Gastrocnemius medialis (tissue), 4 donors: ENCODE measurements at regions of chr20 and their contacts with region 1.

Region 1: DNA sequence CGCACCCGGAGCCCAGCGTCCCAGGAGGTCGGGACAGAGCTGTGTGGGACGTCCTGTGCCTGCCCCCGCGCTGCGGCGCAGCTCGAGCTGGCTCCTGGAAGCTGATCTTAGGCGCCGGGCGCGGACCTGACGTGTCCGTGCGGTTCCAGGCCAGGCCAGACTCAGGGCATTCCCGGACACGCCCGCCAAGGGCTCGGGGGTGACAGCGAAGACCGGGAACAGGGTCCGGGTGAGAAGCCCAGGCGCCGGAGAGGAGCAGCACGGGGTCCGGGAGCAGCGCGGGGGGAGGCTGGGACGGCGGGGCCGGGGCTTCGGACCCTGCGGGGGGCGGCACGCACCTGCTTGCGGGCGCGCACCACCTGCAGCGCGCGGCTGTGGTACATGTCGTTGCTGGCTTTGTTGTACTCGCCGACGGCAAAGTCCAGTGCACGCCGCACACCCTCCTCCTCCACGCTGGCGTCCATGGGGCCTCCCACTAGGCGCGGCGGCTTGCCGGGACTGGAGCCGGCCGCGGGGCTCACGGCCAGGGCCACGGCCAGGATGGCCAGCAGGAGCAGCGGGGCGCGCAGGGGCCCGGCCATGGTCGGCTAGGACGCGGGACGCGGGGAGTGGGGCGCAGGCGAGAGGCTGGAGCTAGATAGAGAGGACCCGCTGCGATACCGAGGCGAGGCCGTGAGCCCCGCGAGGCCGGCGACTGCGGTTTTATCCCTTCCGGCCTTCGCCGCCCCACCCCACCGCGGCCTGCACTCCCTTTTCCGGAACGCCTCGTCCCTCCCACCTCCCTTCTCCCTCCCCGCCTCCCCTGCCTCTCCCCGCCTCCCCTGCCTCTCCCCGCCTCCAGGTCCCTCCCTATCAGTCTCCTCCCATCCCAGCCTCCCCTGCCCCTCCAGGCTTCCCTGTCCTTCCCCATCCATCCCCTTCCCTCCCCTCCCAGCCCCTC is at the start of gene CST3:
- DNase-seq: peak; percentile 94 to 97
- ATAC-seq: peak; percentile 31 to 32
- H3K4me3 ChIP-seq: peak within 1 kb of the TSS; percentile 70 to 98 (median 83)
- H3K27ac ChIP-seq: peak within 1 kb of the TSS; percentile 96 to 100 (median 96)
- H3K4me1 ChIP-seq: peaks cover 58 to 67% of the 10 kb centered on the region in 2 donors
- H3K27me3 ChIP-seq: no peaks in the 10 kb centered on the region
- CTCF ChIP-seq: peak in 1 of 5 experiments; percentile 18
- POLR2A ChIP-seq: peak; percentile 96
- total RNA-seq, gene CST3: 461 to 1,821 (median 697) TPM

Region 2: DNA sequence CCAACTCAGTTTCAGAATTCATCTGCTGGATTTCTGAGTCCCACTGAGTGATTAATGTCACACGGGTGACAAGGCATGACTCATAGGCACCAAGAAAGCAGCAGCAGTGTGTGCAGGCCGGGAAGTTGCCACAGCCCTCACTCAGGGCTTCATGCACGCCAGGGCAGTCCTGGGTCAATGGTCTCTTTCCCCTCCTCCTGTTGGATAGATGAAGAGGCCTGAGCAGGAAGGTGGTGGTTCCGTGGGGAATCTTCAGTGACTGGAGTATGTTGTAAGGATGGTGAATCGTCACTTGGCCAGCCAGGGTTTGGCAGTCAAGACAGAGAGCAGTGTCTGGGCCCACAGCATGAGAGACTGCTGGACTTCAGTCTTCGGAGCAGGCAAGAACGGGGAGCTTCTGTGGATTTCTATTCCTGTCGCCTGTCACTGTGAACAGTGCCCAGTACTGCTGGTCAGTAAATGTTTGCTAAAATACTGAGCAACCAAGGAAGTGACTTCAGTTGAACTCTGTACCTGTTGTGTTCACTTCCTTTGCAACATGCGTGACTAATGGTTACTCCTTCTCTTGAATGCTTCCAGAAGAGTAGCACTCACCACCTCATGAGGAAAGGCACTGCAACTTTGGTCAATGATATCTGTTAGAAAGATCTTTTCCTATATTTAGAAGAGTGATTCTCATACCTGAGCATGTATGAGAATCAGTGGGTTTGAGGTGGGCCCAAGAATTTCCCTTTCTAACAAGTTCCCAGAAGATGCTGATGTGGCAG is 489.4 kb before region 1 on chr20:
- in situ Hi-C with region 1: loop called (anchors 25 kb)
- intact Hi-C with region 1: loop called (anchors 1 kb)
- DNase-seq: peak; percentile 91 to 96
- ATAC-seq: peak; percentile 59 to 72
- H3K4me3 ChIP-seq: peak overlapping the region in 2 of 4 donors; percentile 15 to 36
- H3K27ac ChIP-seq: peak overlapping the region; percentile 94 to 99 (median 94)
- H3K4me1 ChIP-seq: peaks cover 91 to 97% of the 10 kb centered on the region in 2 donors
- H3K27me3 ChIP-seq: no peaks in the 10 kb centered on the region
- CTCF ChIP-seq: no peak
- POLR2A ChIP-seq: peak; percentile 89 to 91

Region 3: GRCh38 chr20:23161968-23162696 is 475.4 kb before region 1 on chr20:
- in situ Hi-C with region 1: loop called (anchors 25 kb)
- intact Hi-C with region 1: no loop called
- DNase-seq: peak; percentile 92 to 97
- ATAC-seq: peak; percentile 90 to 94
- H3K4me3 ChIP-seq: no peak overlapping the region
- H3K27ac ChIP-seq: peak overlapping the region; percentile 77 to 83 (median 78)
- H3K4me1 ChIP-seq: peaks cover 44 to 56% of the 10 kb centered on the region in 2 donors
- H3K27me3 ChIP-seq: no peaks in the 10 kb centered on the region
- CTCF ChIP-seq: no peak
- POLR2A ChIP-seq: peak in 1 of 2 donors; percentile 21

Region 4: DNA sequence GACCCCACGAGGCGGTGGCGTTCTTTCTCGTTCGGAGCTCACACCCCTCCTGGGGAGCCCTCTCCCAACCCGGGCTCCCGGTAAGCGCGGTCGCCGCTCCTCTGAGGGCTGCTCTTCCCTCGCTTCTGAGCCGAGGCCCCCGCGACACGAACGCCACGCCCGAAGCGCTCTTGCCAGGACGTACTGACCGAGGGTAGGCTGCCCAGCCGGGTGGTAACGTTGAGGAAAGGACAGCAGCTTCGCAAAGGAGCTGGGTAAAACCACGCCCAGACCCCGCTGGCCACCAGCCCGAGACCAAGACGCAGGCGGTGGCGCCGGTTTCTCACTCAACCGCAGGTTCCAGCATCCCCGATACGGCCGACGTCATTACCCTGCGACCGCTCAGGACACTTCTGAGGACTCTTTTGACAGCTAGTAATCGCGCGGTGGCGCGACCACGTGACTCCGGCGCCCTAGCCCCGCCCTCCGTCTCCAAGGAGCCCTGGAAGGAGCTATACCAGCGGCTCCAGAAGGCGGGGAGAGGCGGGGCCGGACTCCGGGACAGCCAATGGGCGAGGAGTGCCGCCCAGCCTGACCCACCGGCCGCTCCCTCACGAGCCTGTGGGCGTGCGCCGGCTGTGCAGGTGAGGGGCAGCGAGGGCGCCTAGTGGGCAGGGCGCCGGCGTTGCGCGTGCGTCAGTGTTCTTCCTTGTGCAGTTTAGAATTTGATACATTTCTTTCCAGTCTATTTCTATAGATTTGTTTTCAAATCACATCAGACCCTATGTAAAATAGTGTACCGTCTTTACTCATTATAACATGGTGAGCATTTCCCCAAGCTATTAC is 279.6 kb before region 1 on chr20:
- in situ Hi-C with region 1: loop called in 2 of 4 experiments (anchors 10 kb)
- intact Hi-C with region 1: loop called (anchors 2 kb)
- DNase-seq: peak; percentile 100
- ATAC-seq: peak; percentile 72 to 78
- H3K4me3 ChIP-seq: peak overlapping the region; percentile 76 to 91 (median 78)
- H3K27ac ChIP-seq: peak overlapping the region; percentile 97 to 99 (median 98)
- H3K4me1 ChIP-seq: peaks cover 29% of the 10 kb centered on the region in 2 donors
- H3K27me3 ChIP-seq: no peaks in the 10 kb centered on the region
- CTCF ChIP-seq: peak in 2 of 5 experiments; percentile 18 to 45
- POLR2A ChIP-seq: peak; percentile 79 to 89

Region 5: DNA sequence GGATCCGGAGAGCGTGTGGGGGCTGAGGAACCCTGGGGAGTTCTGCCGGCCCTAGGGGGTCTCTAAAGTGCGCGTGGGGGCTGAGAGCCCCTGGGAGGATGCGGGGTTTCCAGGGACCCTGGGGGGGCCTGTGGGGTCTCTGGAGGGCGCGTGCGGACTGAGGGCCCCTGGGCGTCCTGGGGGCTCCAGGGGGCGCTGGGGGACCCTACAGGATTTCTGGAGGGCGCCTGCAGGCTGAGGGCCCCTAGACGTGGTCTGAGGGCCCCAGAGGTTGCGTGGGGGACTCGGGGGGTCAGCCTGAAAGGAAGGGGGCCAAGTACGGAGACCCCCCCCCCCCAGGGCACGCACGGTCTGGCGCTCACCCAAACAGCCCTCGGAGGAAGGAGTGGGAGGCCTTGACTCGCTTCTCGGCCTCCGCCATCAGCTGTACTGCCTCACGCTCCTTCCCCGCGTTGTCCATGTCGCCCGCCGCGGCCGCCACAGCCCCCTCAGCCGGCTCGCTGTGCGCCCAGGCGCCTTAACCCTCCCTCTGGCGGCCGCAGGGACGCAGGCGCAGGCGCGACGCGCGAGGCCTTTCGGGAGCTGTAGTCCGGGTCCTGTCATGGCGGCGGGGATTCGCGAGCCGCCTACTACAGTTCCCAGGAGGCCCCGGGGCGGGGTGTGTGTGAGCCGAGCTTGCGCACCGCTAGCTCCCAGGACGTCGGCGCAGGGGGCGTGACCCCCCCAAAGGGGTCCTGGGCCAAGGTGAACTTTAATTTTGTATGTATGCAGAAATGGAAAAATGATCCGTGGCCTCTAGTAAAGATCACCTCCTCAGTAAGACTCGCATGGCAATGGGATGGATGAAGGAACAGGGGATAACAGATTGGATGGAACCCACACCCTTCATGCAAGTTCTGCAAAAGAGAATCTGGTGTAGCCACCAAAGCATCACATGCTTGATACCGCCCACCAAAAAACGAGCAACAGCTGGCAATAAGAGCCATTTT is 216.3 kb before region 1 on chr20 and contains the start of gene NAPB:
- in situ Hi-C with region 1: no loop called
- intact Hi-C with region 1: loop called (anchors 10 kb)
- DNase-seq: peak; percentile 92
- ATAC-seq: peak; percentile 89 to 91
- H3K4me3 ChIP-seq: peak within 1 kb of the TSS; percentile 83 to 100 (median 96)
- H3K27ac ChIP-seq: peak within 1 kb of the TSS; percentile 97 to 99 (median 98)
- H3K4me1 ChIP-seq: peaks cover 19 to 30% of the 10 kb centered on the region in 2 donors
- H3K27me3 ChIP-seq: no peaks in the 10 kb centered on the region
- CTCF ChIP-seq: peak; percentile 62 to 92 (median 84)
- POLR2A ChIP-seq: peak; percentile 97
- total RNA-seq, gene NAPB: 3.2 to 8.3 (median 3.8) TPM

Region 6: GRCh38 chr20:23655491-23656211 is 18.1 kb after region 1 on chr20:
- in situ Hi-C with region 1: no loop called
- intact Hi-C with region 1: no loop called
- DNase-seq: peak in 1 of 2 donors; percentile 49
- ATAC-seq: peak in 1 of 2 donors; percentile 24
- H3K4me3 ChIP-seq: no peak overlapping the region
- H3K27ac ChIP-seq: peak overlapping the region; percentile 12 to 61 (median 38)
- H3K4me1 ChIP-seq: peaks cover 8 to 21% of the 10 kb centered on the region in 2 donors
- H3K27me3 ChIP-seq: no peaks in the 10 kb centered on the region
- CTCF ChIP-seq: no peak
- POLR2A ChIP-seq: no peak

Region 7: GRCh38 chr20:23744817-23745216 is 107.3 kb after region 1 on chr20:
- in situ Hi-C with region 1: no loop called
- intact Hi-C with region 1: no loop called
- DNase-seq: no peak
- ATAC-seq: no peak
- H3K4me3 ChIP-seq: no peak overlapping the region
- H3K27ac ChIP-seq: no peak overlapping the region
- H3K4me1 ChIP-seq: no peaks in the 10 kb centered on the region
- H3K27me3 ChIP-seq: no peaks in the 10 kb centered on the region
- CTCF ChIP-seq: no peak
- POLR2A ChIP-seq: no peak

Region 8: DNA sequence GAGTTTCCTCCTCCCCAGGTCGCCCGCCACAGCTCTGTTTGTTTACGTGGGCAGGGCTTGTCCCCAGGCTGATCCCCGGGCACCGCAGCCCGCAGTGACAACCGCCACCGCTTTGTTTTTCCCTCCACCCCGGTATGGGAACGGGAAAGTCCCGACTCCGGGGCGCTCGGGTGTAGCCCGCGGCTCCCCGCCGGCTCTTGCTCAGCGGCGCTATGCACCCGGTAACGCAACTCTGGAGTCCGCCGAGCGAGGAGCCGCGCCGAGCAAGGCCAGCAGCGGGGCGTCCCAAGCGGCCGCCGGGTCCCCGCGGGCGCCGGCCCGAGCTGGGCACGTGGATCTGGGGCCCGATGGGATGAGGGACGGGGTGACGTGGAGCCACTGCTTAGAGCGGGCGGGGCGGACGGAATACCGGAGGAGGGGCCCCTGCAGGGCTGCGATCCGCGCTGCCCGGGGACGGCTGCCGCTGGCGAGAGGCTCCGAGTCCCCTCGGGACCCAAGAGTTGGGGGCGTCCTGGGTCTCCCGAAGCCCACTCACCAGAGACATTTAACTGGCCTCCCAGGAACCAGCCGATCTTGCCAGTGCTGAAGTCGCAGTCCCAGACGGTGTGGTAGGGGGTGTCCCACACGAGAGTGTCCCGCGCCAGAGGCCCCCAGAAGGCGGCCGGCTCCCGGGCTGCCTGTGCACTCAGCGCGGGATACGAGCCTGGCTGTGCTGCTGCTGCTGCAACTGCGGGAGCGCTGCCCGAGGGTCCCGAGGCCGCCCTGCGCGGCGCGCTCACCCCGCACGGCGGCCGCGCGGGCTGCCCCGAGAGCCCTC is 1419.9 kb after region 1 on chr20:
- in situ Hi-C with region 1: loop called in 2 of 4 experiments (anchors 25 kb)
- intact Hi-C with region 1: loop called (anchors 5 kb)
- DNase-seq: peak; percentile 67 to 74
- ATAC-seq: peak; percentile 65 to 70
- H3K4me3 ChIP-seq: peak overlapping the region; percentile 72 to 93 (median 80)
- H3K27ac ChIP-seq: peak overlapping the region; percentile 87 to 95 (median 94)
- H3K4me1 ChIP-seq: peaks cover 44 to 55% of the 10 kb centered on the region in 2 donors
- H3K27me3 ChIP-seq: no peaks in the 10 kb centered on the region
- CTCF ChIP-seq: peak in 1 of 5 experiments; percentile 5
- POLR2A ChIP-seq: peak; percentile 89 to 92

Region 9: DNA sequence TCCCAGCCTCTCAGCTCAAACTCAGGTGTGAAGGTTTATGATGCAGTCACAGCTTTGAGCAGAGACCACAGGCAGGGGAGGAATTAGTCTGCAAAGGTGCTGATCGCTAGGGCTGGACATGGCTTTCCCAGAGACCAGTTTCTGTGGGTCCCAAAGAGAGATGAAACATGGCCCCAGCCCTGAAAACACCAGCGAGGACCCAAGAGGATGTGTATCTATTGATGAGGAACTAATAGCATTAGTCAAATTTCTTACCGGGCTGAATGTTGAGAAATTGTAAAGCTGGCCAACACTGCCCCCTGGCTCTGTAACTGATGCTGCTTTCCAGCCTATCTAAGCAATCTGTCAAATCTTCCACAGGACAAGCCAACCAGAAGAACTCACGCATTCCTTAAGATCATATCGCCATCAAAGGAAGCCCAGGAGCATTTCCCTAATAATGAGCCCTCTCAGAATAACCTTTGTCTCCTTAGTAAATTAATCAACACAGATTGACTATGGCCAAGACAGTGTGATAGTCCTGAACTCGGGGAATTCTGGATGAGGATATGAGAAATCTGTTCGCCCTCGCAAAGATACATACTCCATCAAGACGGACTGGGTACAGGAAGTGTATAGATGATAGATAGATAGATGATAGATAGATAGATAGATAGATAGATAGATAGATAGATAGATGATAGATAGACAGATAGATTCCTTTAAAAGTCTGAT is 1428.2 kb after region 1 on chr20:
- in situ Hi-C with region 1: loop called in 2 of 4 experiments (anchors 25 kb)
- intact Hi-C with region 1: no loop called
- DNase-seq: peak in 1 of 2 donors; percentile 54
- ATAC-seq: peak; percentile 88 to 93
- H3K4me3 ChIP-seq: no peak overlapping the region
- H3K27ac ChIP-seq: no peak overlapping the region
- H3K4me1 ChIP-seq: peaks cover 0 to 3% of the 10 kb centered on the region in 2 donors
- H3K27me3 ChIP-seq: peaks cover 0 to 3% (median 0%) of the 10 kb centered on the region in 3 donors
- CTCF ChIP-seq: peak; percentile 83 to 91 (median 86)
- POLR2A ChIP-seq: no peak